ENCODE measurements at regions of chr2 and their contacts with region 1.

Region 1: GRCh38 chr2:84041506-84041905 is 417.6 kb downstream of the SUCLG1 start:
- DNase-seq: no peak
- H3K4me3 ChIP-seq: no peak overlapping the region
- CTCF ChIP-seq: no peak

Region 2: DNA sequence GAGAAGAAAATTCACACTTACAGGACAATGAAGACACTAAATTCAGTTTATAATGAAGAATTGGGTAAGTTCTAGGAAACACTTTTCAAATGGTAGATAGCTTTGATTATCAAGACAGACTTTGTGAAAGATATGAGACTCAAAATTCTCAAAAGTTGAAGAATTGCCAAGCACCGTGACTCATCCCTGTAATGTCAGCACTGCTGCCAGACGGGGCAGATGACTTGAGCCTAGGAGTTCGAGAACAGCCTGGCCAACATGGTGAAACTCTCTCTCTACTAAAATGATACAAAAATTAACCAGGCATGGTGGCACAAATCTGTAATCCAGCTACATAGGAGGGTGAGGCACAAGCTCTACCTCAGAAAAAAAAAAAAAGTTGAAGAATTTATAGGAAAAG is 1916.9 kb before region 1 on chr2:
- in situ Hi-C with region 1: loop called (anchors 10 kb)
- DNase-seq: no peak
- H3K4me3 ChIP-seq: no peak overlapping the region
- CTCF ChIP-seq: no peak

Region 3: GRCh38 chr2:83196225-83196624 is 845.3 kb before region 1 on chr2:
- in situ Hi-C with region 1: no loop called
- DNase-seq: peak; percentile 23
- H3K4me3 ChIP-seq: no peak overlapping the region
- CTCF ChIP-seq: peak; percentile 42

Region 4: GRCh38 chr2:83967854-83968253 is 73.7 kb before region 1 on chr2:
- in situ Hi-C with region 1: no loop called
- DNase-seq: no peak
- H3K4me3 ChIP-seq: no peak overlapping the region
- CTCF ChIP-seq: no peak

Region 5: DNA sequence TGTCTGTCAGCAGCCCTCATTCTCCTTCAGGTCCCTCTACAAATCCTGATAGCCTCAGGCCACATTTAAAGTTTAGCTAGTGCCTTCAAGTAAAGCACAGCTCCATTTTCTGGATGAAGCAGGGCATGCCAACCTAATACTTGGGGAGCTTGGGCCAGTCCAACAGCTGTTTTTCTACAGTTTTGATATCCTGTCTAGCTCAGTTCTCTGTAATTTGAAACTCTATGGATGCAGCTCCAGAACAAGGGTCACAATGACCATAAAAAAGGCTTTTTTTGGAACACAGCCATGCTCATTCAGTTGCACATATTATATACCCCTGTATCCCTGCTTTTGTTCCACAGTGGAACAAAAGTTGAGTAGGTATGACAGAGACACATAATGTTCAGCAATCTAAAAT is 44.1 kb after region 1 on chr2:
- in situ Hi-C with region 1: no loop called
- DNase-seq: no peak
- H3K4me3 ChIP-seq: no peak overlapping the region
- CTCF ChIP-seq: no peak

Measured in astrocyte of the cerebellum (primary cell).